ENCODE measurements at regions of chr22 and their contacts with region 1.

Region 1: GRCh38 chr22:29593923-29594322 is 9.5 kb upstream of the NF2 start:
- DNase-seq: no peak
- ATAC-seq: no peak
- H3K4me3 ChIP-seq: no peak overlapping the region
- H3K27ac ChIP-seq: no peak overlapping the region
- H3K4me1 ChIP-seq: no peaks in the 10 kb centered on the region; the same call in 1 of the 2 replicates
- H3K27me3 ChIP-seq: no peaks in the 10 kb centered on the region
- CTCF ChIP-seq: no peak

Region 2: GRCh38 chr22:29625090-29625825 is 31.3 kb after region 1 on chr22:
- CTCF ChIA-PET with region 1: interaction called, 5 read pairs
- POLR2A ChIA-PET with region 1: no interaction called
- intact Hi-C with region 1: loop called (anchors 5 kb)
- DNase-seq: peak; percentile 83
- ATAC-seq: peak; percentile 13
- H3K4me3 ChIP-seq: peak overlapping the region; percentile 30; the same call in 1 of the 2 replicates
- H3K27ac ChIP-seq: peak overlapping the region; percentile 88
- H3K4me1 ChIP-seq: peaks cover 87% of the 10 kb centered on the region
- H3K27me3 ChIP-seq: no peaks in the 10 kb centered on the region
- CTCF ChIP-seq: peak; percentile 84

Measured in PC-3 (cell line).